Spleen (tissue), 13 donors: ENCODE measurements at regions of chr19 and their contacts with region 1.

Region 1: GRCh38 chr19:18152444-18152816 is 533 bp upstream of the PIK3R2 start:
- DNase-seq: peak; percentile 99
- H3K4me3 ChIP-seq: peak overlapping the region; percentile 53 to 92 (median 78)
- H3K27ac ChIP-seq: peak overlapping the region; percentile 95 to 99 (median 96)
- H3K4me1 ChIP-seq: peaks cover 21 to 68% (median 44%) of the 10 kb centered on the region in 6 donors
- H3K27me3 ChIP-seq: no peaks in the 10 kb centered on the region
- CTCF ChIP-seq: peak; percentile 68 to 90 (median 86)
- POLR2A ChIP-seq: peak in 1 of 3 donors; percentile 56

Region 2: DNA sequence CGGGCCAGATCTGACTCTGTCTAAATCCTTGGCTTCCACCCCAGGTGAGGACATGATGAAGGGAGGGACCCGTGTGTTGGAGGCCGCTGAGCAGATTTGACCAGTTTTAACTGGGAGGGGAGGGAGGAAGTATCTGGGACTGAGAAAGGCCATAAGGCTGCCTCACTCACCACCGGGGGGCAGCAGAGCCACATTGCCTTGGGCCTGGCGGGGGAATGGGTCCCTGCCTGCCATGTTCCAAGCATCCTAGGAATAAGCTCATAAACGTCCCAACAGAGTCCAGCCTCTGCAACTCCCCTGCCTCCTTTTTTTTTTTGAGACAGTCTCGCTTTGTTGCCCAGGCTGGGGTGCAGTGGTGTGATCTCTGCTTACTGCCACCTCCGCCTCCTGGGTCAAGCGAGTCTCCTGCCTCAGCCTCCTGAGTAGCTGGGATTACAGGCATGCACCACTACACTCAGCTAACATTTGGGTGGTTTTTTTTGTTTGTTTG is 39.4 kb before region 1 on chr19:
- intact Hi-C with region 1: loop called (anchors 5 kb)
- DNase-seq: peak; percentile 94
- H3K4me3 ChIP-seq: peak overlapping the region in 1 of 8 donors; percentile 1
- H3K27ac ChIP-seq: peak overlapping the region in 4 of 8 donors; percentile 35 to 74 (median 48)
- H3K4me1 ChIP-seq: peaks cover 19 to 92% (median 55%) of the 10 kb centered on the region in 6 donors
- H3K27me3 ChIP-seq: peaks cover 0 to 12% (median 0%) of the 10 kb centered on the region in 7 donors
- CTCF ChIP-seq: peak; percentile 78 to 95 (median 89)
- POLR2A ChIP-seq: no peak